Right ventricle myocardium inferior (tissue), 1 donor: ENCODE measurements at regions of chr6 and their contacts with region 1.

Region 1: DNA sequence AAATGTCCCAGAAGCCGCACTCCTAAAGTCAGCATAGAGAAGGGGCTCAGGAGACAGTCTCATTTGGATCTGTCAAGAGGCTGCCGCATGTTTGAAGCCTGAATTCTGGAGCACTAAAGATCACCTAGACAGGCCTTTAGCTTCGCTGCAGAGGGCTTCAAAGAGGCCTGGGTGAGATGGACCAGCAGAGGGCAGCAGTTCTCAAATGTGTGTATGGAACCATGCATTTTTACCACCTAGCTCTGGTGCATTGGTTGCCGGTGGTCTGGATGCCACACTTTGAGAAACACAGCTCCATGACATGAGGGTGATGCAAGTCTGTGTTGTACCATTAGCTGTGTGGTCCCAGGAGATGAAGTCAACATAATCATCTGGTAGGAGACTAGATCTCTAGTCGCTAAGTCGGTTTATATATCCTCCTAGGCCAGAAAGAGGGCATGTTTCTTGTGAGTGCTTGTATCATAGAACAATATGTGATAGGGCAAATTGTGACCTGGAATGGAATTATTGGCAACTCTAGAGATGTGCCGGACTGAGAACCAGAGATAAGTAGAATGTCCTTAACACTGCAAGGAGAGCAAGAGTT is 64.8 kb downstream of the KIAA0319 start:
- DNase-seq: peak; percentile 76
- ATAC-seq: peak; percentile 71

Region 2: GRCh38 chr6:24520929-24521546 is 60.1 kb before region 1 on chr6:
- intact Hi-C with region 1: no loop called
- DNase-seq: no peak
- ATAC-seq: peak; percentile 86

Region 3: DNA sequence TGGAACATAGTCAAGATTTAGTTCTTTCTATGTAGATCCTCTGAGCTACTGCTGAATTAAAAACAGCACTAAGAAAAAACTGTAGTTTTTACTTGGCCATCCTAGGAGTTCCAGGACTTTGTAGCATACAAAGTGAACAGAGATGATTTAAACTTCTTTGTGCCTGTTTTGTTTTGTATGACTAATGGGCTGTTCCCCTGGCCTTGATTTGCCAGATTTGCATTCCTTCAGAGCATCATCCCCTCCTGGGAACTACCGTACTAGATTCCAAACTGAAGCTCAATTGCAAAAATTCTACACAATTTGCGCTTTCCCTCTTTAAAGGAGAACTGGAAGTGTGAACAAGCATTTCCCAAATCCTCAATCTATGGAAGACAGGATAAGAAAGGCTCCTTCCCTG is 108.8 kb after region 1 on chr6:
- intact Hi-C with region 1: loop called (anchors 1 kb)
- DNase-seq: no peak
- ATAC-seq: no peak

Region 4: DNA sequence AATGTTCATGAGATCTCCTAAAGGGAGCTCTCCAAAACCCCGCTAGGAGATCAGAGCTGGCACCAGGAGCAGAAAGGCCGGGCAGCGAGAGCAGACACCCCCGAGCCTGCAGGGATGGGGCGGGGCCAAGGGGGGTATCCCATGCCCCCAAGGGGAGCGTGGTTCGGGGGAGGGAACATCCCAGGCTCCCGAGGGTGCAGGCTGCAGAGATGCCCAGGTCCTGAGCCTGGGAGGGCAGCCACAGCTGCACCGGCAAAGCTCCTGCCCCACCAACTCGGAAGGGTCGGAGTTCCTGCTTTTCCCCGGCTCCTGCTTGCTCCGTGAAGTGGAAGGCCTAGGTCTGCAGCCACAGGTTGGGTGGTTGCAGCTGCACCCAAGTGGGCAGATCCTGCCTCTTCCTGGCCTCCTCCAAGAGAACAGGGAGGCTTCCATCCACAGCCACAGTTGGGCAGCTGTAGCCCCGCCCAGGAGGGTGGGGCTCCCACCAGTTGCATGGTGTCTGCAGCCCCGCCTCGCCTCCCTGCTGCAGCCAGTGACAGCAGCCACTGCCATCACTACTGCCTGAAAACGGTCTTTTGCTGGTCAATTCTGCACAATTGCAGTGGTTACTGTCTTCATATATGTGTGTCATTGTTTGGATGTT is 180.1 kb after region 1 on chr6:
- intact Hi-C with region 1: loop called (anchors 5 kb)
- DNase-seq: no peak
- ATAC-seq: no peak

Region 5: DNA sequence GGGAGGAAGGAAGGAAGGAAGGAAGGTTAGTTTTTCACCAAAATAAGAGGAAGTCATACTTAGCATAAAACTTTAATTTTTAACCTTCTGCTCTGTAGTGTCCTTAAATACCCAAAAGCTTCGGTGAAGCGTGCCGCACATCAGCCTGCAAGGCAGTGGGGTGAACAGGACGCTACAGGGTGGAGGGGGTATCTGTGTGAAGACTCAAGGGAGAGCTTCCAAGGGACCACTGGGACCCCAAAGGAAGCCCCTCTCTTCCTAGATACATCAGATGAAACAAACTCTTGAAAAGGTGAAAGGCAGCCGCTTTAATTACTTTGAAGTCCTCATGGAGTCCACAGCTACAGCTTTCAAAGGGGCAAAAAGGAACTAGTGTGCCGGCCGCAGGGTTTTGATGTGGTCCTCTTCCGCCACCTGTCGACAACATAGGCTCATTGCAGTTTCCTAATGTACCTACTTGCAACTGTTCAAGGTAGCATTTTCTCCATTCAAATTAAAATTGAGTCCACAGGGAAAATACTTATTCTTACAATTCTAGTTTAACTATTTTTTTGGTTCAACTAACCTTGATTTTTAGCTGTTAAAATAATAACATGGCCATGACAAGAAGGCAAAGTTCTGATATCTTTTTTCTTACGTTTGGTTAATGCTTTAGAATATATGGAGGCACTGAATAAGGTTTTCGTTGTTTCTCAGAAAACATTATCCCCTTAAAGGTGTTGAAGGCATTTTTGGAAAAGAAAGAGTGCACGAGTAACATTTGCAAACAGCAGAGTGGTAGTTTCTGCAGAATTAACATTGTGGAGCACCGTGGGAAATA is 489.6 kb after region 1 on chr6:
- intact Hi-C with region 1: loop called (anchors 5 kb)
- DNase-seq: peak; percentile 76
- ATAC-seq: peak; percentile 68